CD4-positive, alpha-beta memory T cell (primary cell): ENCODE measurements at regions of chrX and their contacts with region 1.

Region 1: GRCh38 chrX:119698845-119699244 is 5.9 kb upstream of the SEPTIN6 start:
- DNase-seq: no peak
- H3K4me3 ChIP-seq: no peak overlapping the region
- H3K4me3 Mint-ChIP-seq: no peak overlapping the region
- H3K27ac ChIP-seq: no peak overlapping the region
- H3K27ac Mint-ChIP-seq: peak overlapping the region in 2 of 7 donors; percentile 20 to 43
- H3K4me1 ChIP-seq: peaks cover 2% of the 10 kb centered on the region
- H3K4me1 Mint-ChIP-seq: peaks cover 6 to 11% (median 7%) of the 10 kb centered on the region in 4 donors
- H3K27me3 ChIP-seq: no peaks in the 10 kb centered on the region
- H3K27me3 Mint-ChIP-seq: peaks cover 0 to 2% of the 10 kb centered on the region in 2 donors

Region 2: GRCh38 chrX:119778829-119779228 is 80.0 kb after region 1 on chrX:
- CTCF ChIA-PET with region 1: no interaction called
- POLR2A ChIA-PET with region 1: no interaction called
- intact Hi-C with region 1: loop called (anchors 1 kb)
- DNase-seq: no peak
- H3K4me3 ChIP-seq: no peak overlapping the region
- H3K4me3 Mint-ChIP-seq: no peak overlapping the region
- H3K27ac ChIP-seq: no peak overlapping the region
- H3K27ac Mint-ChIP-seq: peak overlapping the region in 3 of 7 donors; percentile 19 to 81 (median 79)
- H3K4me1 ChIP-seq: no peaks in the 10 kb centered on the region
- H3K4me1 Mint-ChIP-seq: peaks cover 0 to 13% (median 0%) of the 10 kb centered on the region in 4 donors
- H3K27me3 ChIP-seq: no peaks in the 10 kb centered on the region
- H3K27me3 Mint-ChIP-seq: no peaks in the 10 kb centered on the region